MCF 10A (cell line): ENCODE measurements at regions of chr2 and their contacts with region 1.

Region 1: DNA sequence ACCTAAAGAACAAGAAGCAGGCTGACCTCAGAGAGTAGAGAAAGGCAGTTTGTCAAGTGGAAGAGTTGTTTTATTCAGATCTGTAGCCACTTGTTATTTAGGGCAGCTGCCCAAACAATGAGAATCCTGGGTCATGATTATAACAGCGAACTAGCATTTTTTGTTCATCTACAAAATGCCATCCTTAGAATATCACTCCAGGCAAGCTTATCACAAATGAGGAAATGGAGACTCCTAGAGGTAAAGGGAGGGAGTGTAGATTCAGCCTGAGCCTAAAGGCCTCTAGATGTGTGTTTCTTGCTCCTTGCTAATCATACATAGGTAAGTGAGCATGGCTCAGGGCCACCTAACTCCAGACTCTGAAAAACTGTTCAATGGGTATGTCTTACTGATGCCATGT is 126.1 kb downstream of the HNMT start:
- DNase-seq: peak; percentile 71
- H3K4me3 Mint-ChIP-seq: no peak overlapping the region
- H3K27ac Mint-ChIP-seq: no peak overlapping the region
- H3K4me1 Mint-ChIP-seq: peaks cover 27% of the 10 kb centered on the region
- H3K27me3 Mint-ChIP-seq: no peaks in the 10 kb centered on the region
- CTCF ChIP-seq: peak; percentile 47

Region 2: GRCh38 chr2:137897082-137897481 is 193.2 kb before region 1 on chr2:
- CTCF ChIA-PET with region 1: no interaction called
- POLR2A ChIA-PET with region 1: no interaction called
- intact Hi-C with region 1: no loop called
- DNase-seq: no peak
- H3K4me3 Mint-ChIP-seq: no peak overlapping the region
- H3K27ac Mint-ChIP-seq: no peak overlapping the region
- H3K4me1 Mint-ChIP-seq: no peaks in the 10 kb centered on the region
- H3K27me3 Mint-ChIP-seq: no peaks in the 10 kb centered on the region
- CTCF ChIP-seq: no peak

Region 3: DNA sequence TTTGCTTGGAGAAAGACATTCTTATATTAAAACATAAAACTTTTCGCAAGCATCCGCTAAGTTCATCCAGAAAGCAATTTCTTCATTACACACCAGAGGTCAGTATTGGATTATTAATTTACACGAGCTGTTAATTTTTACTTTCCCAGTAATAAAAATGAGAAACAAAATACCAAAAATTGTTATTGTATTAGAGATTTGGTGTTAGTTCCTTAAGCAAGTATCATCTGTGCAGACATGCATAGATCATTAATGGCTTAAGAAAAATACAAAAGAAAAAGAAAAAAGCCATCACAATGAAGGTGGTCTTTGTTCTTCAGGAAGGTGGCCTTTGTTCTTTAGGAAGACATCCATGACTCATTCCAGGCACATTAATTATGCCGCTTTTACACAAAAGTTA is 179.7 kb before region 1 on chr2:
- CTCF ChIA-PET with region 1: interaction called, 15 read pairs
- POLR2A ChIA-PET with region 1: no interaction called
- intact Hi-C with region 1: loop called (anchors 1 kb)
- DNase-seq: peak; percentile 19
- H3K4me3 Mint-ChIP-seq: no peak overlapping the region
- H3K27ac Mint-ChIP-seq: no peak overlapping the region
- H3K4me1 Mint-ChIP-seq: no peaks in the 10 kb centered on the region
- H3K27me3 Mint-ChIP-seq: no peaks in the 10 kb centered on the region
- CTCF ChIP-seq: peak; percentile 63

Region 4: GRCh38 chr2:137947728-137948336 is 142.5 kb before region 1 on chr2:
- CTCF ChIA-PET with region 1: interaction called, 8 read pairs
- POLR2A ChIA-PET with region 1: no interaction called
- intact Hi-C with region 1: loop called (anchors 1 kb)
- DNase-seq: peak; percentile 72
- H3K4me3 Mint-ChIP-seq: no peak overlapping the region
- H3K27ac Mint-ChIP-seq: no peak overlapping the region
- H3K4me1 Mint-ChIP-seq: peaks cover 11% of the 10 kb centered on the region
- H3K27me3 Mint-ChIP-seq: no peaks in the 10 kb centered on the region
- CTCF ChIP-seq: peak; percentile 57

Region 5: GRCh38 chr2:137963535-137964065 is 126.7 kb before region 1 on chr2:
- CTCF ChIA-PET with region 1: no interaction called
- POLR2A ChIA-PET with region 1: no interaction called
- intact Hi-C with region 1: no loop called
- DNase-seq: no peak
- H3K4me3 Mint-ChIP-seq: no peak overlapping the region
- H3K27ac Mint-ChIP-seq: peak overlapping the region; percentile 81
- H3K4me1 Mint-ChIP-seq: peaks cover 13% of the 10 kb centered on the region
- H3K27me3 Mint-ChIP-seq: no peaks in the 10 kb centered on the region
- CTCF ChIP-seq: no peak

Region 6: DNA sequence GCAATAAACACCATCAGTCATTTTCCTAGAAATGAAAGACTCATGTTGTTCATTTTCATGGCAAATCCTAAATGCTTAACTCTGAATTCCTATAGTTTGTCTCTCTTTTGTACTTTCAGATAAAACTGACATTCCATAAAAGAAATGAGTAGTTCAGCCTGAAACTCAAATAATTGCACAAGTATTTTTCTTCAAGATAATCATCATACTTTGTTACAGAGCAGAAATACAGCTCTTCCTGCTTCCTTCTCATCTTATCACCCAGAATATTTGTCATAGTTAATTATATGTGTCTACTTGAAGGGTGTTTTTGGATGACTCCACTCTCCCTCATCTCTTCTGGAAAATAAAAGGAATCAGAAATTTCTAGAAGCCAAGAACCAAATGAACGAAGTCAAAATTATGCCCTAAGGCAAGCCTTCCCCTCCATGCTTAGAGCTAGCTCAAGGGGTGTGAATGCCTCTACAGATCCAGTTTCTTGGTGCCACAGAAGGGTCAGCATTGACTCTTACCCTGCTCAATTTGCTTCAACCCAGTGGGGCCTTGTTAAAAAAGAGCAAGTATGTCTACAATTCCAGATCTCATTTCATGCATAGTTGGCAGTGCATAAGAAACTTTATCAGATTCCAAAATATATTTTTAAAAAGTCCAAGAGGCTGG is 15.2 kb after region 1 on chr2:
- CTCF ChIA-PET with region 1: interaction called, 19 read pairs
- POLR2A ChIA-PET with region 1: no interaction called
- intact Hi-C with region 1: no loop called
- DNase-seq: no peak
- H3K4me3 Mint-ChIP-seq: no peak overlapping the region
- H3K27ac Mint-ChIP-seq: no peak overlapping the region
- H3K4me1 Mint-ChIP-seq: peaks cover 10% of the 10 kb centered on the region
- H3K27me3 Mint-ChIP-seq: no peaks in the 10 kb centered on the region
- CTCF ChIP-seq: no peak

Region 7: DNA sequence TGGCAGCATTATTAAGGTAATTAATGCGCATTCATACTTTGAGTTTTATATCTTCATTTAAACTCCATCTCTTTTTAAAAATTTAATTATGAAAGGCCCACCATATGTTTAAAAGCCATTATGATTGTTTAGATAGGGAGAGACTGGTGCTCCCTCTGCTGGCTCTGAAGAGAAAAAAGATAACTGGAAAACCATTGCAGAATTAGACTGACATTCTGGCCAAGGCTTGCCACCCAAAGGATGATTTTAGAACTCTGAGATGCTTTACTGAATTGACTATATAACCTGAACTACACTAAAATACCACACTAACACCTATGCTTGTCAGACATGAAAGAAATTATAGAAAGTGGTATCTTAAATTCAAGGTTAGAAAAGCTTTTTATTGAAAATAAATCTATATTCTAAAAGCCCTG is 283.7 kb after region 1 on chr2:
- CTCF ChIA-PET with region 1: interaction called, 7 read pairs
- POLR2A ChIA-PET with region 1: no interaction called
- intact Hi-C with region 1: loop called (anchors 10 kb)
- DNase-seq: peak; percentile 63
- H3K4me3 Mint-ChIP-seq: no peak overlapping the region
- H3K27ac Mint-ChIP-seq: no peak overlapping the region
- H3K4me1 Mint-ChIP-seq: no peaks in the 10 kb centered on the region
- H3K27me3 Mint-ChIP-seq: no peaks in the 10 kb centered on the region
- CTCF ChIP-seq: peak; percentile 59

Region 8: DNA sequence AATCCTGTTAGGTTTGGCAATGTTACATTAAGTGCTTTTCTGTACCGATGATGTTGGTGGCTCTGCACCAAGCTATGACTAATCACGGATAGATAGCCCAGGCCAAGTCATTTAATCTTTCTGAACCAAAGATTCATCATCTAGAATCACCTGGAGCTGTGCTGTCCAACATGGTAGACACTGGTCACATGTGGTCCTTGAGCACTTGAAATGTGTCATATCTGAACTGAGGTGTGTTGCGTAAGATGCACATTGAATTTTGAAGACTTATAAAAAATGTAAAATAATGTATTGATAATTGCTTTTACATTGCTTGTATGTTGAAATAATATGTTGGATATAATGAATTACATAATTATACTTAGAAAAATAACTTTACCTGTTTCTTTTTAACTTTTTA is 729.6 kb after region 1 on chr2:
- CTCF ChIA-PET with region 1: no interaction called
- POLR2A ChIA-PET with region 1: no interaction called
- intact Hi-C with region 1: loop called (anchors 2 kb)
- DNase-seq: no peak
- H3K4me3 Mint-ChIP-seq: no peak overlapping the region
- H3K27ac Mint-ChIP-seq: no peak overlapping the region
- H3K4me1 Mint-ChIP-seq: no peaks in the 10 kb centered on the region
- H3K27me3 Mint-ChIP-seq: peaks cover 16% of the 10 kb centered on the region
- CTCF ChIP-seq: no peak